ENCODE measurements at regions of chr6 and their contacts with region 1.

Region 1: GRCh38 chr6:128520436-128521281 is at the start of gene PTPRK:
- DNase-seq: peak; percentile 94
- H3K4me3 ChIP-seq: peak within 1 kb of the TSS; percentile 87 to 99 (median 98)
- H3K27ac ChIP-seq: peak within 1 kb of the TSS; percentile 98
- H3K4me1 ChIP-seq: peaks cover 36% of the 10 kb centered on the region
- H3K27me3 ChIP-seq: no peaks in the 10 kb centered on the region
- CTCF ChIP-seq: peak; percentile 32 to 68
- POLR2A ChIP-seq: peak; percentile 89
- total RNA-seq, gene PTPRK: 74.0 and 88.3 TPM in 2 replicates

Region 2: GRCh38 chr6:127737009-127737486 is 783.6 kb before region 1 on chr6:
- CTCF ChIA-PET with region 1: interaction called, 29 read pairs
- POLR2A ChIA-PET with region 1: no interaction called
- dilution Hi-C with region 1: no loop called
- intact Hi-C with region 1: loop called (anchors 1 kb)
- DNase-seq: peak; percentile 79
- H3K4me3 ChIP-seq: no peak overlapping the region
- H3K27ac ChIP-seq: no peak overlapping the region
- H3K4me1 ChIP-seq: no peaks in the 10 kb centered on the region
- H3K27me3 ChIP-seq: peaks cover 1 to 4% of the 10 kb centered on the region in 2 experiments
- CTCF ChIP-seq: peak; percentile 31 to 46
- POLR2A ChIP-seq: no peak

Region 3: DNA sequence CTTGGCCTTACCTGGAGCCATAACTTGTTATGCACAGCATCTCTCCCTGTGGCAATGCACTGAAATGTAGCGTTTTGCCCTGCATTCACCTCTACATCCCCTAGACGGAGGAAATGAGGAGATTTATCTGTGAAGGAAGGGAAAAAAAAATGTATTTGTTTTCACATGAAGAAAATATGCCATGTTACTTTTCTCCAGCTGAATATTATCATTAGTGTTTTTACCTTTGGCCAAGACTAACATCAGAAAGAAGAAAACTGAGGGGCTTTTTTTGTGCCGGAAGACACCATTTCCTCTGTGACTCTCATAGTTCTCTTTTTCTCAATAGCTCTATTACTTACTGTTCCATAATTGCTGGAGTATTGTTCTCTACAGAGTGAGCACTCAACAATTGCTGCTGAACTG is 280.6 kb before region 1 on chr6:
- CTCF ChIA-PET with region 1: interaction called, 6 read pairs
- POLR2A ChIA-PET with region 1: no interaction called
- dilution Hi-C with region 1: no loop called
- intact Hi-C with region 1: loop called (anchors 2 kb)
- DNase-seq: peak; percentile 60
- H3K4me3 ChIP-seq: no peak overlapping the region
- H3K27ac ChIP-seq: no peak overlapping the region
- H3K4me1 ChIP-seq: peaks cover 18% of the 10 kb centered on the region
- H3K27me3 ChIP-seq: no peaks in the 10 kb centered on the region
- CTCF ChIP-seq: no peak
- POLR2A ChIP-seq: no peak

Region 4: GRCh38 chr6:128339635-128340450 is 180.8 kb before region 1 on chr6:
- CTCF ChIA-PET with region 1: interaction called, 12 read pairs
- POLR2A ChIA-PET with region 1: no interaction called
- dilution Hi-C with region 1: no loop called
- intact Hi-C with region 1: no loop called
- DNase-seq: no peak
- H3K4me3 ChIP-seq: no peak overlapping the region
- H3K27ac ChIP-seq: no peak overlapping the region
- H3K4me1 ChIP-seq: no peaks in the 10 kb centered on the region
- H3K27me3 ChIP-seq: no peaks in the 10 kb centered on the region
- CTCF ChIP-seq: no peak
- POLR2A ChIP-seq: no peak

Region 5: DNA sequence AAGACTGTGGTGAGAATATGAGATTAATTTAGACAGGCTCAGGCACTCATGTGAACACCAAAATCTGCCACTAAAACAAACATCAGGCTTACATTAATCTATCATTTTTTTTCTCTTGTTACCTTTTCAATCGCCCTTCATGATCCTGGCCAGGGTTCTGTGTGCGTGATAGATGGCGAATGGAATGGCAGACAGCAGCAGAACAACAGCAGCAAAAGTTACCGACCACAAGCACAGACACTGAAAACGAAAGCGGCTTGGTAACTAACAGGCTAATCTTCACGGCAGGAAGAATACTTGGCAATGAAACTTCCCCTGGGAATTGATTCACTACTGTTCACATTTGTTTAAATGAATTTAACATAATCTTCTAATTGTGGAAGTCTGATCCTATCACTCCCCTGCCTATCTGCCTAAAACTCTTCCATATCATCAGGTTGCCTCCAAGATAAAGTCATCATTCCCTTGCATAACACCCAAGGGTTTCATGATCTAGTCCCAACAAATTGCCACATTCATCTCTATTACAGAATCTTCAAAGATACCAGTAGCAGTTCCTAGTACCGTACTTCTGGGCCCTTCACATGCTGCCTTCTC is 29.0 kb before region 1 on chr6:
- CTCF ChIA-PET with region 1: interaction called, 15 read pairs
- POLR2A ChIA-PET with region 1: interaction called, 3 read pairs
- dilution Hi-C with region 1: no loop called
- intact Hi-C with region 1: loop called (anchors 1 kb)
- DNase-seq: peak; percentile 79
- H3K4me3 ChIP-seq: peak overlapping the region; percentile 18 to 86 (median 51)
- H3K27ac ChIP-seq: peak overlapping the region; percentile 99
- H3K4me1 ChIP-seq: peaks cover 34% of the 10 kb centered on the region
- H3K27me3 ChIP-seq: no peaks in the 10 kb centered on the region
- CTCF ChIP-seq: no peak
- POLR2A ChIP-seq: peak; percentile 5

Region 6: DNA sequence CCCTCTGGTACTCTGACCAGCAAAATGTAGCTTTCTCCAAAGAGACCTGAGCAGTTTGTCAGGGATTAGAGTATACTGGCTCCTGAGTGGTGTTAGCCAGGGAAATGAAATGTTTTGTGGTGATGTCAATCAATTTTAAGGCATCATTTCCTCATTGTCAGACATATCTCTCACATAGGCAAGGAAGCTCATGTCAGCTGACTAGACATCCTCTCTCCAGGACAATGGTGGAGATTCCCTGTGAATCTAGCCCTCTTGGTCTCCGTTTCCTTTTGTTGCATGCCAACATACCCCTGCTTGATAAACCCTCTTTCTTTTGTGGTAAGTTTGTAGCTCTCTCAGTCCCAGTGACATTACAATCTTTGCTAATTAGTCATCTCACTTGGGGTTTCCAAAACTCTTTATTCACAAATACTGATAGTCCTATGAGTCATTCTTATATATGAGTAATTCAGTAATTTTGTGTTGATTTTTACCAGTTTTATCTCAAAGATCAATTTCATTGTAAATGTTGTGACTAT is 135.4 kb after region 1 on chr6:
- CTCF ChIA-PET with region 1: interaction called, 7 read pairs
- POLR2A ChIA-PET with region 1: interaction called, 5 read pairs
- dilution Hi-C with region 1: no loop called
- intact Hi-C with region 1: loop called (anchors 1 kb)
- DNase-seq: peak; percentile 93
- H3K4me3 ChIP-seq: no peak overlapping the region
- H3K27ac ChIP-seq: peak overlapping the region; percentile 92
- H3K4me1 ChIP-seq: peaks cover 23% of the 10 kb centered on the region
- H3K27me3 ChIP-seq: no peaks in the 10 kb centered on the region
- CTCF ChIP-seq: no peak
- POLR2A ChIP-seq: peak; percentile 15

Region 7: DNA sequence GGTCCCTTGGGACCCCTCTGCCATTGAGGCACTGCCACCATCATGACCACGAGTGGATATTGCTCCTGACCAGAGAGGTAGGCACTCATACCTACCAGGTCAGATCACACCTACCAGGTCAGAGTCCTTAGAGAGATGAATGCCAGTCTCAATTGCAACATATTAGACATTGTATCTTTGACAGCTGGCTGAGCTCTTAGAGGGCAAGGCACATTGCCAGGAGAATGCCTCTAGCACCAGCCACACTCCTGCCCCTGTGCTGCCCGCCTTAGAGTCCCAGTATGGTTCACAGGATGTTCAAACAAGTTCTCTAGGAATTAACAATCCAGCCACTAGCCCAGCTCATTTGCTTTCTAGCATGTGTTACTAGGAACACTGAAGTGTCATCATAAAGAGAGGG is 1274.6 kb after region 1 on chr6:
- CTCF ChIA-PET with region 1: no interaction called
- POLR2A ChIA-PET with region 1: no interaction called
- dilution Hi-C with region 1: no loop called
- intact Hi-C with region 1: no loop called
- DNase-seq: no peak
- H3K4me3 ChIP-seq: no peak overlapping the region
- H3K27ac ChIP-seq: no peak overlapping the region
- H3K4me1 ChIP-seq: no peaks in the 10 kb centered on the region
- H3K27me3 ChIP-seq: peaks cover 5 to 10% of the 10 kb centered on the region in 2 experiments
- CTCF ChIP-seq: no peak
- POLR2A ChIP-seq: no peak